ENCODE measurements at regions of chr2 and their contacts with region 1.

Region 1: DNA sequence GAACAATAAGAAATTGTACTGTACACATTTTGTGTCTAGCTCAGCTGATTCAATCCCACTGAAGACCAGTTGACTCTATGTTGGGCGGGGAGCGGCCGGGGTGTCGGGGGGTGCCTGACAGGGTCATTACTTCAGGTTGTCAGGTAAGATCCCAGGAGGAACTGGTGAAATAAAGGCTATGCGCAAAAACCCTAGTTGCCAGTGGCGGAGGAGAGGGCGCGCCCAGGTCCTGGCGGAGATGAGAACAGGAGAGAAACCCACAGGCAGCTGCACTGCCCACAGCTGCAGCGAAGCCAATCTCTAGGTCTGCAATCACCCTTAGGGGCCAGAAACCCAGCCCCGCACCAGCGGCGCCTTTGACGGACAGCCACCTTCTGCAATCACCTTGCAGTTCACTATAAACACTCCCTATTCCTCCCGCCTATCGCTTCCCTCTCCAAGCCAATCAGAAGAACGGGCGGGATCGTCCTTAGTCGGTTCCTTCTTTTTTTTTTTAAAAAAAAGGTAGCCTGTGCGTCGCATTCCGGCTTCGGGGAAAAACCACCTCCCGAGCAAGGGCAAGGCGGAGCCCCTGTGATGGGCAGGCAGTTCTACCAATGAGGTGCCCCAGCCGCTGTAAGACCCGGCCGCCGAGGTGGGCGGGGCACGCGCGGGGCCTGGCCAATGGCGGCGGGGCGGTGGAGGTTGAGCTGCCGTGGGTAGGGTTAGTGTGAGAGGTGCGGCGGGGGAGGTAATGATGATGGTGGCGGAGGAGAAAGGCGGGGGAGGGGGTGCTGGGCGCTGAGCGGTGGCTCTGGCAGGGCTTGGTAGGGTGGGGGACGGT is at the start of gene EHBP1:
- DNase-seq: peak; percentile 99
- H3K4me3 Mint-ChIP-seq: peak within 1 kb of the TSS; percentile 87
- H3K27ac Mint-ChIP-seq: peak within 1 kb of the TSS; percentile 69
- H3K4me1 Mint-ChIP-seq: peaks cover 35% of the 10 kb centered on the region
- H3K27me3 Mint-ChIP-seq: no peaks in the 10 kb centered on the region
- CTCF ChIP-seq: no peak
- total RNA-seq, gene EHBP1: 82.9 and 89.2 TPM in 2 replicates

Region 2: DNA sequence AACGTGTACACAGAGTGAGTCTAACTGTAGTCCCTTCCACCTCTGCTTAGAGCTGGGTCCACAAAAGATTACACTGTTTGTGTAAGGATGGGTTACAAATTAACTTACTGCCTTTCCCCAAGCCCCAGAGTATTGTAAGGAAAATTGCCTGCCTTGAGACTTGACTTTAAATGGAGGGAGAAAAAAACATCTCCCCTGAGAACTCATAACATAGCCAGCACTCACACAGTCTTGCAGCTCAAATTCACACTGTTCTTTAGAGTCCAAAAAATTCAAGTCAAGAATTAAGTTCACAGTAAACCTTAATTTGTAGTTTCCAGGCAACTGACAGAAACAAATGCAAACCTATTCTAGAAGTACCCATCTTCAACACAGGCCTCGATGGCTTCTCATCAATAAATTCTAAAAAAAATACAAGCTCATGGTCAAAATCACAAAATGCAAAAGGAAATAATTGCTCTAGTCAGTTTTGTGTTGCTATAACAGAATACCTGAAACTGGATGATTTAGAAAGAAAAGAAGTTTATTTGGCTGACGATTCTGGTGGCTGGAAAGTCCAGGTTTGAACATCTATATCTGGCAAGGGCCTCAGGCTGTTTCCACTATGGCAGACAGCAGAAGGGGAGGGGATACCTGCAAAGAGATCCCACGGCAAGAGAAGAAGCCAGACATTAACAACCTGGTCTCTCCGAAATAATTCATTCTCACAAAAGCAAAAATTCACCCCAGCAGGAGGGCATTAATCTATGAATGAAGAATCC is 164.6 kb before region 1 on chr2:
- CTCF ChIA-PET with region 1: no interaction called
- intact Hi-C with region 1: no loop called
- DNase-seq: peak; percentile 13
- H3K4me3 Mint-ChIP-seq: no peak overlapping the region
- H3K27ac Mint-ChIP-seq: peak overlapping the region; percentile 19
- H3K4me1 Mint-ChIP-seq: peaks cover 56% of the 10 kb centered on the region
- H3K27me3 Mint-ChIP-seq: no peaks in the 10 kb centered on the region
- CTCF ChIP-seq: no peak

Region 3: DNA sequence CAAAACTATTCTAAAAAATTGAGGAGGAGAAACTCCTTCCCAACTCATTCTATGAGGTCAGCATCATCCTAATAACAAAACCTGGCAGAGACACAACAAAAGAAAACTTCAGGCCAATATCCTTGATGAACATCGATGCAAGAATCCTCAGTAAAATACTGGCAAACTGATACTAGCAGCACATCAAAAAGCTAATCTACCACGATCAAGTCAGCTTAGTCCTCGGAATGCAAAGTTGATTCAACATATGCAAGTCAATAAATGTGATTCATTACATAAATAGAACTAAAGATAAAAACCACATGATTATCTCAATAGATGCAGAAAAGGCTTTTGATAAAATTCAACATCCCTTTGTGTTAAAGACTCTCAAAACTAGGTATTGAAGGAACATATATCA is 63.4 kb after region 1 on chr2:
- CTCF ChIA-PET with region 1: no interaction called
- intact Hi-C with region 1: loop called (anchors 5 kb)
- DNase-seq: no peak
- H3K4me3 Mint-ChIP-seq: no peak overlapping the region
- H3K27ac Mint-ChIP-seq: peak overlapping the region; percentile 12
- H3K4me1 Mint-ChIP-seq: peaks cover 29% of the 10 kb centered on the region
- H3K27me3 Mint-ChIP-seq: no peaks in the 10 kb centered on the region
- CTCF ChIP-seq: no peak

Measured in Calu3 (cell line).